Gastrocnemius medialis (tissue), 4 donors: ENCODE measurements at regions of chr17 and their contacts with region 1.

Region 1: DNA sequence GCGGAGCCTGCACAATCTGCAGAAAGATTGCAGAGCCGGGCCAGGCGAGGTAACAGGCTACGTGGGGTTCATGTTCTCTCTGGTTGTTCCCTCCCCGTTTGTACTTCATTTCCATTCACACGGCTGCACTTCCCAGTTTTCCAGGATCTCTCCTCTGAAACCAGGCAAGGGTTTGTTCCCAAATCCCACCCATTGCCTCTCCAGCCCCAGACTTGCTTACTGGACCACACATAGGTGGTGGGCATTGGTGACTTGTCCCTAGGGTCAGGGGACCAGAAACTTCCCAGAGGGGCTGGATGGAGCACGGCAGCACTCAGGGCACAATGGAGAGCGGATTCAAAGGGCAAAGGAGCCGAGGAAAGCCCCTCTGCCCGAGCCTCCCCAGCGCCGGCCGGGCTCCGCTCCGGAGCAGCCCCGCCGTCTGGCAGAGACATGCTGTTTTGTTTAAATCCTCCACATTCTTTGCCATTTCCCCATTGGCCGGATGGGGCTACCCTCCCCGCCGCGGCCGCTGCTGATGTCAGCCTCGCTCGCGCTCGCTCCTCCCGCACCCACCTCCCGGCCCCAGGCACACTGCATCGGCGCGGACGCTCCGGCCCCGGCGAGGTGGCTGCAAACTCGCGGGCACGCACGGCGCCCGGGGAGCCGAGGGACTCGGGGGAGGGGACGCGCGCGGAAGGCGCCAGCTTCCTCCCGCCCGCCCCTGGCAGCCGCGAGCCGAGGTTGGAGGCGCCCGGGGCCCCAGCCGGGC is at the start of gene PITPNC1:
- DNase-seq: peak; percentile 53 to 54
- ATAC-seq: peak; percentile 18 to 23
- H3K4me3 ChIP-seq: peak within 1 kb of the TSS; percentile 59 to 85 (median 78)
- H3K27ac ChIP-seq: peak within 1 kb of the TSS; percentile 79 to 94 (median 84)
- H3K4me1 ChIP-seq: peaks cover 6 to 9% of the 10 kb centered on the region in 2 donors
- H3K27me3 ChIP-seq: no peaks in the 10 kb centered on the region
- CTCF ChIP-seq: no peak
- POLR2A ChIP-seq: peak; percentile 63 to 82
- total RNA-seq, gene PITPNC1: 2.3 to 8.6 (median 4.3) TPM

Region 2: GRCh38 chr17:66873962-66874361 is 502.9 kb before region 1 on chr17:
- in situ Hi-C with region 1: no loop called
- intact Hi-C with region 1: no loop called
- DNase-seq: no peak
- ATAC-seq: no peak
- H3K4me3 ChIP-seq: no peak overlapping the region
- H3K27ac ChIP-seq: no peak overlapping the region
- H3K4me1 ChIP-seq: no peaks in the 10 kb centered on the region
- H3K27me3 ChIP-seq: peaks cover 0 to 8% (median 0%) of the 10 kb centered on the region in 3 donors
- CTCF ChIP-seq: no peak
- POLR2A ChIP-seq: no peak

Region 3: DNA sequence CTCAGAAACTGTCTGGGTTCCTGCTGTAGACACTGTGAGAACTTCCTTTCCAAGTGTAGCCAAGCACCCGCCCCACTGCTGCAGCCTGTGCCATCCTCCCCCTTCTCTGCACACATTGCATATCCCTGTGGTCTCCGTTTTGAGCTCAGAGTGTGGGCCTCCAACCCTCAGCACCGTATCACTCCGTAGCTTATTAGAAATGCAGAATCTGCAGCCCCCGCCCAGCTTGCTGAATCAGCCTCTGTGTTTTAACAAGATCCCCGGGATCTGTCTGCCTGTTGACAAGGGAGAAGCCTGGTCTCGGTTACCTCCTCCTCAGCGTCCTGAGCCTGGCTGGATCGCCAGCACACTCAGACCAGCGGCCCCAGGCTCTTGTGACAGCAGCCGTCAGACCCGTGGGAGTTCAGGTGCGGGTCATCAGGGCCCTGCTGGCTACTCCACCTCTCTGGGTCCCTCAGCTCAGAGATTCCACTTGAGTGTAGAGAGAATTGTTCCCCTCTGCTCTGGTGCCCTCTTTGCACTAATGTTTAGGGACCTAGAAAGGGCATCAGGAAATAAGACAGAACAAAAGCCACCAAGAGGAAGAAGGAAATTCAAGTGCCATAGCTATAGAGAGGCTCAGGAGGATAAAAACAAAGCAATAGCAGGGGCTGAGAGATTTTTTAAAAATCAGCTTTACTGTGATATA is 92.4 kb after region 1 on chr17:
- in situ Hi-C with region 1: loop called in 2 of 4 experiments (anchors 5 kb)
- intact Hi-C with region 1: no loop called
- DNase-seq: no peak
- ATAC-seq: no peak
- H3K4me3 ChIP-seq: no peak overlapping the region
- H3K27ac ChIP-seq: peak overlapping the region; percentile 46 to 68 (median 58)
- H3K4me1 ChIP-seq: no peaks in the 10 kb centered on the region
- H3K27me3 ChIP-seq: no peaks in the 10 kb centered on the region
- CTCF ChIP-seq: no peak
- POLR2A ChIP-seq: no peak

Region 4: GRCh38 chr17:67475236-67475937 is 98.5 kb after region 1 on chr17:
- in situ Hi-C with region 1: loop called in 3 of 4 experiments (anchors 5 to 10 kb)
- intact Hi-C with region 1: loop called (anchors 1 kb)
- DNase-seq: peak; percentile 45 to 65
- ATAC-seq: peak; percentile 83 to 86
- H3K4me3 ChIP-seq: no peak overlapping the region
- H3K27ac ChIP-seq: peak overlapping the region; percentile 39 to 72 (median 62)
- H3K4me1 ChIP-seq: peaks cover 7 to 8% of the 10 kb centered on the region in 2 donors
- H3K27me3 ChIP-seq: no peaks in the 10 kb centered on the region
- CTCF ChIP-seq: peak; percentile 74 to 94 (median 88)
- POLR2A ChIP-seq: peak in 1 of 2 donors; percentile 10

Region 5: GRCh38 chr17:67491009-67491680 is 114.2 kb after region 1 on chr17:
- in situ Hi-C with region 1: loop called in 2 of 4 experiments (anchors 10 kb)
- intact Hi-C with region 1: loop called (anchors 5 kb)
- DNase-seq: peak; percentile 86 to 90
- ATAC-seq: peak; percentile 90 to 92
- H3K4me3 ChIP-seq: peak overlapping the region; percentile 19 to 44 (median 38)
- H3K27ac ChIP-seq: peak overlapping the region; percentile 55 to 82 (median 68)
- H3K4me1 ChIP-seq: peaks cover 23 to 31% of the 10 kb centered on the region in 2 donors
- H3K27me3 ChIP-seq: peaks cover 0 to 9% (median 7%) of the 10 kb centered on the region in 3 donors
- CTCF ChIP-seq: no peak
- POLR2A ChIP-seq: peak; percentile 57 to 78

Region 6: DNA sequence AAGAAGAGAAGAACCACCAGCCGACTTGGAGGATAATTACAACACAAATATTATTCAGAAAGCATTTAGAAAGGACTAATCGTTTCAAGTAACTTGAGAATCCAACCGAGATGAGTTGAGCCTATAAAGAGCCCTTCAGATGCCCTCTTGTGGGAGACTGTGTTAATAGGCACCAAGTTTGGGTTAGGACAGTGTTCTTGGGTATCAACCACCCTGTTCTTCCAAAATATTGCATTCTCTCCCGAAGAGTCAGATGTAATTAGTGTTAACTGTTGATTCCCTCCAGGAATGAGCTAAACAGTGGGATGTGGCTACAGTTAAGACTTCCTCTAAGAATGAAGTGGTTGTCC is 253.0 kb after region 1 on chr17:
- in situ Hi-C with region 1: no loop called
- intact Hi-C with region 1: loop called (anchors 1 kb)
- DNase-seq: no peak
- ATAC-seq: no peak
- H3K4me3 ChIP-seq: no peak overlapping the region
- H3K27ac ChIP-seq: no peak overlapping the region
- H3K4me1 ChIP-seq: no peaks in the 10 kb centered on the region
- H3K27me3 ChIP-seq: no peaks in the 10 kb centered on the region
- CTCF ChIP-seq: peak in 3 of 5 experiments; percentile 22 to 41 (median 28)
- POLR2A ChIP-seq: no peak

Region 7: DNA sequence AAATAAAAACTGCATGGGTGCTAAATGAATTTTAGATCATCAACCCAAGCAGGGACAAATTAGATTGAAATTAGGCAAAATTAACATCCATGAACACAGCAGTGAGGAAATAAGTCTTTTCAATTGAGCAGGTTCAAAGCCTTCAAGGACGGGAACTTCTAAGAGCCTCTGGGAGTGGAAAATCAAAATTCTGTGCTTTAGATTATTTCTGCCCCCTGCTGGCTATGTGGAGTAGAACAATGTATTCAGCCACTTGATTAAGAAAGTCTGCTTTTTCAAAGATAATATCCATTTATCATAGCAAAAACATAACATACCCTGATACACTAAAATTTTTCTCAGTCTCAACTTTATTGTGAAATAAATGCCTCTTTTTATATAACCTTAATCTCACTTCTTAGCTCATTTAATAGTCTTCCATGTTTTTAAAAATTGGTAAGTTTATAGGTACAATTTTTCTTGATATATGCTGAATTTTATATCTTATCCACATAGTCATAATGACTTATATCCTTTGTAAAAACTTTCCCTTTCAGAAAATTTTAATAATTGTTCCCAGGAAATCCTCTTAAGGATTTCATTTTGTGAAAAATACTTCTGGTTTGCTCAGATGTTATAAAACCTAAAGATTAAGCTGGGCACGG is 312.7 kb after region 1 on chr17:
- in situ Hi-C with region 1: loop called (anchors 5 to 10 kb)
- intact Hi-C with region 1: loop called (anchors 1 kb)
- DNase-seq: peak in 1 of 2 donors; percentile 3
- ATAC-seq: peak; percentile 47 to 55
- H3K4me3 ChIP-seq: no peak overlapping the region
- H3K27ac ChIP-seq: no peak overlapping the region
- H3K4me1 ChIP-seq: no peaks in the 10 kb centered on the region
- H3K27me3 ChIP-seq: no peaks in the 10 kb centered on the region
- CTCF ChIP-seq: peak; percentile 65 to 80 (median 77)
- POLR2A ChIP-seq: no peak